ENCODE measurements at regions of chr10 and their contacts with region 1.

Region 1: DNA sequence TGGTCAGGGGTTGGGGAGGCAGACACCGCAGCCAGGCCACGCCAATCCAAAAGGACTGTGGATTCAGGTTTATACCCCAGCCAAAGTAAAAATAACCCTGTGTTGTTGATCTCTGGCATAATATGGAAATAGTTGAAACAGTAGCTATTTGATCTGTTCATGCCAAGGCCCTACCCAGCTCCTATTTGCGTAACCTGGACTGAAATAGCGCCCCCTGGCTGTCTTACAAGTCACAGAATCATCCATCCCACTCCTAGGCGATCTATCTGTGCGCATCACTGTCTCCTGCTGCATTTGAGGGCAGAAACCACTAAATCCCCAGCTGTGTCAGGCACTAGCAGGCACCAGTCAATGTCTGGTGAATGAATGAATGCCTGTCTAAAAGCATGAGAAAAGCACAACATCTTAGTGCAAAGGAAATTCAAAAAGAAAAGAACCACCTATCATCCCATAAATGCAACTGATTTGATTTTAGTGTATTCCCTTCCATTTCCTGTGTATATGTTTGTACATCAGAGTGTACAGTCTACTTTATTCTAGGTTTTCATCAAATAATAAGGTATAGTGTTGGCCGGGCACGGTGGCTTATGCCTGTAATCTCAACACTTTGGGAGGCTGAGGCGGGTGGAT is 160.0 kb downstream of the SLIT1 start:
- DNase-seq: peak; percentile 78

Region 2: DNA sequence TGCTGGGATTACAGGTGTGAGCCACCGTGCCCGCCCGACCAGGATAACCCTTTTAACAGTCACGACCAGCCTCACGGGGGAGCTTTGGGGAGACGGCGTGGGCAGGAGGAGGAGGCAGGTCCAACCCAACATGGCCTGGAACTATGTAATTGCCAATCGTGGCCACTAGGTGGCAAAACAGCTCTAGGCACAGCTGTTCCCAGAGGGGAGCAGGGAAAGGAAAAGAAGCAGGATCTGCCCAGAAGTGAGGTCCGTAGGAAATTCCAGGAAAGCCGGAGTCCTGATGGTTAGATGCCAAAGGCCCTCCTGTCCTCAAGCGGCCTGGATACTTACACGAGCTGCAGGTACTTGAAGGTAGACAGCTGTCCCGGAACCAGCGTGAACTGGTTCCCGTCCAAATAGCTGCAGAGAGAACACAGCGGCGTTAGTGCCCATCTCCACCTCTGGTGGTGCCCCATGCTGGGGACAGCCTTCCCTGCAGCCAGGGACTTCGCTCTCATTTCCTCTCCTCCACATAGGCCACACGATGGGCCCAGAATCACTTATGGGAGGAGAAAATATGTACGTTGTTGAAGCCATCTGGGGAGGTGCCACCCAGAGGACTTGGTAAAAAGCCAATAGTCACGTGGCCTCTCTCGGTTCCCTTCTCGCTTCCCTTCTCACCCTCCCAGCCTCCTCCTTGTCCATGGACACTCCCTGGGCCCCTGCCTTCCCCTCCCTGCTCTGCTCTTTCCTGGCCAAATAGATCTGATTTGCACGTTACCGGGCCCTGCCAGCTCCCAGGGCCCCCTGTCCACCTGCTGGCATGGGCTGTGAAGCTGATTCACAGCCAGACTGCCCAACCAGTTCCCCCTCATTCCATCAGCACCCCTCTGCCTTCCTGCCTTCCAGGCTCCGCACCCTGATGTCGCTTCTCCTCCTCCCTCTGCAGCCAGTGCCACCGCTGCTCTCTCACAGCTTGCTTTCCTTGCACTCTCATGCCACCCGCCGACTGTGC is 11.9 kb after region 1 on chr10:
- CTCF ChIA-PET with region 1: interaction called, 31 read pairs
- POLR2A ChIA-PET with region 1: interaction called, 3 read pairs
- DNase-seq: peak; percentile 90

Region 3: GRCh38 chr10:97508342-97508741 is 482.6 kb after region 1 on chr10:
- CTCF ChIA-PET with region 1: no interaction called
- POLR2A ChIA-PET with region 1: no interaction called
- DNase-seq: no peak

Measured in HEK293T (cell line).